A549 (cell line): ENCODE measurements at regions of chr10 and their contacts with region 1.

Region 1: DNA sequence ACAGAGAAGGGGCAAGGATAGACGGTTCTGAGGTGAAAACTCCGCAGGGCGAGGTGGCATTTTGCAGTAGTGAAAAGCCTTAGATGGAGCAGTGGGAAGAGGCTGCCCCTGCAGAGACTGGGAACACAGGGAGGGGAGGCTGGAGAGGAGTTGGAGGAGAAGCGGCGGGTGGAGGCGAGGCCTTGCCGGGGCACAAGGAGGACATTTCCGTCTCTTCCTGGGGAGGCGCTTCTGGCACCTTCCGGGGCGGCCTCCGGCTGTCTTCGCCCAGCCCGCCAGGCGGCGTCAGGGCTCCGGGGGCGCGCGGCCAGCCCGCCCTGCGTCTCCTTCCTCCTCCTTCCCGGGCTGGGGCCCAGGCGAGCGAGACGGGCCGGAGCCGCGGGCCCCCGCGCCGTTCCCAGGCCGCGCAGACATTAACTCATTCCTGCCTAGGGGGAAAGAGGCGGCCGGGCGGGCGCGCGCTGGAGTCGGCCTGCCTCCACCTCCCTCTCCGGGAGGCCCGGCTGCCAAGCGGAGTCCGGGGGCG is 42.7 kb downstream of the LDB3 start:
- DNase-seq: peak; percentile 88 to 90
- ATAC-seq: peak; percentile 88 to 96
- H3K4me3 ChIP-seq: peak overlapping the region; percentile 72
- H3K27ac ChIP-seq: peak overlapping the region; percentile 96 to 100
- H3K4me1 ChIP-seq: peaks cover 11% of the 10 kb centered on the region; the same call in 2 of the 3 replicates
- CTCF ChIP-seq: peak; percentile 84
- EP300 ChIP-seq: no peak
- POLR2A ChIP-seq: peak; percentile 58
- RAD21 ChIP-seq: peak; percentile 55 to 86

Region 2: GRCh38 chr10:86648706-86649427 is 62.2 kb before region 1 on chr10:
- CTCF ChIA-PET with region 1: no interaction called
- POLR2A ChIA-PET with region 1: no interaction called
- DNase-seq: peak; percentile 40 to 68
- ATAC-seq: peak; percentile 78 to 90
- H3K4me3 ChIP-seq: no peak overlapping the region
- H3K27ac ChIP-seq: peak overlapping the region; percentile 10 to 63; a peak in 4 of 6 replicates
- H3K4me1 ChIP-seq: peaks cover 28% of the 10 kb centered on the region
- CTCF ChIP-seq: no peak
- EP300 ChIP-seq: no peak
- POLR2A ChIP-seq: no peak
- RAD21 ChIP-seq: no peak

Region 3: DNA sequence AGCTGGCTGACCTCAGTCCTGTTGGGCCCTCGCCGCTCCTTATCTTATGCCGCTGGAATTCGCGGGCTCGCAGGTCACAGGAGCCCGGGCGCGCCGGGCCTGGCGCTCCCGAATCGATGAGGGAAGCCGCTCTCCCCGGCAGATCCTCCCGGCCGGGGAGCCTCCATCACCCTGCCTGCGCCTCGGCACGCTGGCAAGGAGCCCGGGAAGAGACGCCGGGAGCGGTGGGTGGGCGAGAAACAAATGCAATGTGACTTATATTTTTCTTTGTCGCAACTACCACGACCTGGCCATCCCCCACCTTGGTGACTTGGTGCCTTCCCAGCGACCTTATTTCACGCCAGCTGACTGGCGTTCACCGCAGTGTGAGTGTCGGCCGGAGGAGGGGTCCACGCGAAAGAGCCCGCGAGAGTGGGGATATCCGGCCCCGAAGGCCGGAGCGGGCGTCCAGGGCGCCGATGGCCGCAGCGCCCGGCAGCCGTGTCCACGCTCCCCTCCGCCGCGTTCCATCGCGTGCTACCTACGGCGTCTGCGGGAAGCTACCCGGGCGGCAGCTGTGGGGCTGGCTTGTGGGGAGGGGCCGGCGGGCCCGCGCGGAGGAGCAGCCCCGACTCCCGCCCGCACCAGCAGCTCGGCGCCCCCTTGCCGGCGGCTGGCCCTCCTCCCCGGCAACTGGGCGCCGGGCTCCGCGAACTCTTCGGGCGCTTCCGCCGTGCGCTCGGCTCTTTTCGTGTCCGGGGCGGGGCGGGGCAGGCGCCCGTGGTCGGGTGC is 44.9 kb after region 1 on chr10:
- CTCF ChIA-PET with region 1: interaction called, 5 read pairs
- POLR2A ChIA-PET with region 1: interaction called, 25 read pairs
- DNase-seq: peak; percentile 81 to 83
- ATAC-seq: peak; percentile 80 to 89
- H3K4me3 ChIP-seq: peak overlapping the region; percentile 79
- H3K27ac ChIP-seq: peak overlapping the region; percentile 98 to 99
- H3K4me1 ChIP-seq: peaks cover 35% of the 10 kb centered on the region
- CTCF ChIP-seq: no peak
- EP300 ChIP-seq: no peak
- POLR2A ChIP-seq: peak; percentile 82
- RAD21 ChIP-seq: no peak